PC-9 (cell line): ENCODE measurements at regions of chr20 and their contacts with region 1.

Region 1: GRCh38 chr20:18496740-18497592 is at the start of gene RBBP9:
- DNase-seq: peak; percentile 65 to 77
- H3K4me3 ChIP-seq: peak within 1 kb of the TSS; percentile 85
- H3K27ac ChIP-seq: no peak within 1 kb of the TSS
- H3K4me1 ChIP-seq: 0 out of 2 replicates have a peak, but pooled peaks cover 10% of the 10 kb centered on the region
- H3K27me3 ChIP-seq: no peaks in the 10 kb centered on the region
- CTCF ChIP-seq: no peak
- total RNA-seq, gene RBBP9: 24.0 and 29.5 TPM in 2 replicates

Region 2: GRCh38 chr20:18466894-18467730 is 29.9 kb before region 1 on chr20 and contains the starts of genes DZANK1 and POLR3F:
- CTCF ChIA-PET with region 1: no interaction called
- POLR2A ChIA-PET with region 1: no interaction called
- intact Hi-C with region 1: loop called (anchors 2 kb)
- DNase-seq: peak; percentile 86 to 96
- H3K4me3 ChIP-seq: peak within 1 kb of the TSS; percentile 97
- H3K27ac ChIP-seq: peak within 1 kb of the TSS; percentile 52
- H3K4me1 ChIP-seq: peaks cover 16% of the 10 kb centered on the region
- H3K27me3 ChIP-seq: no peaks in the 10 kb centered on the region
- CTCF ChIP-seq: no peak
- total RNA-seq, gene DZANK1: 4.4 and 7.3 TPM in 2 replicates
- total RNA-seq, gene POLR3F: 7.4 and 9.6 TPM in 2 replicates

Region 3: DNA sequence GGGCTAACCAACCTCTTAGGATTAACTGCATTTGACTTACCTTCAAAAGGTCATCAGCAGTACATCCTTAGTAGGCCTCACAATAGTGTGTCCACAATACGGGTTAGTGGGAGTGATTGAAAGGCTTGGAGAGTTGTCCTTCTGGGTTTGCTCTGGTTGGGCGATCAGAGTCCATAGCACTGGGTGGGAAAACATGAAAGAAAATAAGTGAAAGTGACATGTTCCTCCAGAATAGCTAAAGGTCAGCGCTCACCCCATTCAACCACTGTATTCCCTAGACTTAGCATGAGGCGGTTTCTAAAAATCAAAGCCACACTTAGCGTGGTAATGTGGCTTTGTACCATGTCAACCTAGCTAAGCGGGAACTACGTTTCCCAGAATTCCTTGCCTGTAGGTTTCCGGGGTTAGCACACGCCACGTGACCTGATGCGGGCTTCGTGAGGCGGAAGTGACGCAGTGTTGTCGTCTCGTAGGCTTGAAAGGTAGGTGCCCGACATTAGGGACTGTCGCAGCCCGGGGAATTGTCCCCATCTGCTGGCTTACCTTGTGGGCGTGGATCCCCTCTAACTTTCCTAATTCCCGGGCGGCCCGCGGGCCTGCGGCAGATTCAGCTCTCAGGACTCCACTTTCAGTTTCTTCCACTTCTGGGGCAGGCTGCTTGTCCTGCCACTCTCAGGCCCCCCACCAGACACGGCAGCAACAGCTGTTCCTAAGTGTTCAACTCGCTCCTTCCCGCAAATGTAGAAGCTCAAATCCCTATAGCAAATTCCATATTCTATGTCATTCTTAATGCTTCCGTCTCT is 296.9 kb after region 1 on chr20:
- CTCF ChIA-PET with region 1: no interaction called
- POLR2A ChIA-PET with region 1: no interaction called
- intact Hi-C with region 1: loop called (anchors 10 kb)
- DNase-seq: peak; percentile 72 to 88
- H3K4me3 ChIP-seq: peak overlapping the region; percentile 79
- H3K27ac ChIP-seq: peak overlapping the region; percentile 7; the same call in 1 of the 2 replicates
- H3K4me1 ChIP-seq: peaks cover 8% of the 10 kb centered on the region
- H3K27me3 ChIP-seq: 0 out of 2 replicates have a peak, but pooled peaks cover 13% of the 10 kb centered on the region
- CTCF ChIP-seq: no peak